OCI-LY7 (cell line): ENCODE measurements at regions of chr2 and their contacts with region 1.

Region 1: DNA sequence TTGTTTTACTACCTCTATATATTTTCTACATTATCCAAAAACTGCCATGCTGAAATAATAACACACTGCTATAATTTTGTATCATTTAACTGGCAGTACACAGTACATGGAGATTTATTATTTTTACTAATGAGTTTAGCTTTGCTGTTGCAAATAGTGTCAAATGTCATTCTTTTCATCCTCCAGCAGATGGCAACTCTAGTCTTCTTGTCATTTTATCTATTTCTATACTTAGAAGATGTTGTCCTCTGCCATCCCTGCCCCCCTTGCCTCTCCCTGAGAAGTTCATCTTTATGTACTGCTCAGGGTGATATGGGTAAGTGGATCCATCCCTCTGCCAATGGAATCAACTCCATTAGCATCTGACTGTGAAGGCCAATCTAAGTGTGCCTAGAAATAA is 21.7 kb upstream of the LRRTM1 start:
- DNase-seq: peak; percentile 40
- H3K4me3 ChIP-seq: no peak overlapping the region
- H3K27ac ChIP-seq: no peak overlapping the region
- H3K4me1 ChIP-seq: no peaks in the 10 kb centered on the region
- CTCF ChIP-seq: peak; percentile 71

Region 2: GRCh38 chr2:80135001-80135400 is 191.2 kb before region 1 on chr2:
- CTCF ChIA-PET with region 1: no interaction called
- POLR2A ChIA-PET with region 1: no interaction called
- intact Hi-C with region 1: no loop called
- DNase-seq: no peak
- H3K4me3 ChIP-seq: no peak overlapping the region
- H3K27ac ChIP-seq: no peak overlapping the region
- H3K4me1 ChIP-seq: no peaks in the 10 kb centered on the region
- CTCF ChIP-seq: no peak

Region 3: GRCh38 chr2:80499095-80499494 is 172.9 kb after region 1 on chr2:
- CTCF ChIA-PET with region 1: no interaction called
- POLR2A ChIA-PET with region 1: interaction called, 3 read pairs
- intact Hi-C with region 1: loop called (anchors 10 kb)
- DNase-seq: peak; percentile 13
- H3K4me3 ChIP-seq: no peak overlapping the region
- H3K27ac ChIP-seq: no peak overlapping the region
- H3K4me1 ChIP-seq: no peaks in the 10 kb centered on the region
- CTCF ChIP-seq: peak; percentile 65

Region 4: GRCh38 chr2:81389203-81389602 is 1063.0 kb after region 1 on chr2:
- CTCF ChIA-PET with region 1: no interaction called
- POLR2A ChIA-PET with region 1: no interaction called
- intact Hi-C with region 1: loop called (anchors 5 kb)
- DNase-seq: peak; percentile 26
- H3K4me3 ChIP-seq: no peak overlapping the region
- H3K27ac ChIP-seq: no peak overlapping the region
- H3K4me1 ChIP-seq: no peaks in the 10 kb centered on the region
- CTCF ChIP-seq: peak; percentile 80